Activated naive CD8-positive, alpha-beta T cell treated with anti-CD3 and anti-CD28 coated beads, Interleukin-2, amount 10 ng/mL, durations not matched to agents 7 days and 5 days (primary cell): ENCODE measurements at regions of chr15 and their contacts with region 1.

Region 1: DNA sequence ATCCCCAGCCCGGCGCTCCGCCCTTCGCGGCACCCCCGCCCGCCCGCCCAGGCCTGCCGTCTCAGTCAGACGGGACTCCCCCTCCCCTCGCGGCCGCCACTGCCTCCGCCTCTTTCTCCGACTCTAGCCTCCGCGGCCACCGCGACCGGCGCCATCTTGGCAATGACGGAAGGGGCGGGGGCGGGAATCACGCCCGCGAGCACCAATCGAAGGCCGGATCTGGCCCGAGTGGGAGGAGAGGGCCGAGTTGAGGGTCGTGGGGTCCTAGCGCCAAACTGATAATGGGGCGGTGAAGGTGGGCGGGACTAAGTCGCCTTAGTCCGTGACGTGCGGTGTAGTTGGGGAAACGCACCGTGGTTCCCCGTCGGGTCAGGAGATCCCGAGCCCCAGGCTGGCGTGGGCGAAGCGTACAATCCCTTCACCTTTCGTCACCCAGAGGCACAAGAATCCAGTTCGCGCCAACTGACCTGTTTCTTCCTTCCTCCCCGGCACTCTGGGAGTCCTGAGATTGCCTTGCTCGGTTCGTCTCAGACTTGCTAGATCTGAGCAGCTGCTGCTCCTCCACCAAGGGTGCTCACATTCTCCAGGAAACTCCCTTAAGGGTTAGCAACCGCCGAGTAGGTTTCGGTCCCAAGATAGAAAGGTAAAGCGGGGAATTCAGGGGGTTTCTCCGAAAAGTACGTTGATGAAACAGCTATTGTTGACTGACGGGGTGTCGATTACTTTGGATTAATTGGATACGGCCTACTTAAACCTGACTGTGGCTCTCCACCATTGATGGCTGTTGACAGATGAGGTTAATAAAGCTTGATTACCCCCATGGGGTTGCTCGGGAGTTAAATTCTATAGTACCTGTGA is at the start of gene DENND4A:
- DNase-seq: peak; percentile 98
- ATAC-seq: peak; percentile 85
- H3K4me3 Mint-ChIP-seq: peak within 1 kb of the TSS; percentile 90
- H3K27ac Mint-ChIP-seq: peak within 1 kb of the TSS; percentile 96
- H3K4me1 Mint-ChIP-seq: peaks cover 43% of the 10 kb centered on the region
- H3K27me3 Mint-ChIP-seq: no peaks in the 10 kb centered on the region
- total RNA-seq, gene DENND4A: 50.4 to 56.7 TPM

Region 2: DNA sequence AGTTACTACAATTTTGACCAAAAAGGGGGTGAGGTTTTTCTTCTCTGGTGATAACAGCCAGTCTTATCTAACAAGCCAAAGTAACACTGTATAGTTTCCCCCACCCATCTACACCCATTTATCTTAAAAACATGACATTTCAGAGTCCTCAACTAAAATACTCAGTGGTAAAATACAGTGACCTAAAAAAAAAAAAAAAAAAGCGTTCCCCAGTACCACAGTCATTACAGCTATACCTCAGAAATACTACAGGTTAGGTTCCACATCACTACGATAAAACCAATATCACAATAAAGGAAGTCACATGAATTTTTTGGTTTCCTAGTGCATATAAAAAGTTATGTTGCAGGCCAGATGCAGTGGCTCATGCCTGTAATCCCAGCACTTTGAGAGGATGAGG is 14.1 kb before region 1 on chr15:
- POLR2A ChIA-PET with region 1: interaction called, 26 read pairs
- DNase-seq: no peak
- ATAC-seq: peak; percentile 70
- H3K4me3 Mint-ChIP-seq: peak overlapping the region; percentile 50
- H3K27ac Mint-ChIP-seq: peak overlapping the region; percentile 77
- H3K4me1 Mint-ChIP-seq: peaks cover 22% of the 10 kb centered on the region
- H3K27me3 Mint-ChIP-seq: no peaks in the 10 kb centered on the region

Region 3: GRCh38 chr15:65818927-65819562 is 26.7 kb after region 1 on chr15:
- POLR2A ChIA-PET with region 1: interaction called, 84 read pairs
- DNase-seq: no peak
- ATAC-seq: peak; percentile 85
- H3K4me3 Mint-ChIP-seq: peak overlapping the region; percentile 66
- H3K27ac Mint-ChIP-seq: peak overlapping the region; percentile 85
- H3K4me1 Mint-ChIP-seq: peaks cover 43% of the 10 kb centered on the region
- H3K27me3 Mint-ChIP-seq: no peaks in the 10 kb centered on the region

Region 4: GRCh38 chr15:65832549-65833364 is 40.4 kb after region 1 on chr15:
- POLR2A ChIA-PET with region 1: interaction called, 51 read pairs
- DNase-seq: peak; percentile 68
- ATAC-seq: peak; percentile 66
- H3K4me3 Mint-ChIP-seq: peak overlapping the region; percentile 84
- H3K27ac Mint-ChIP-seq: peak overlapping the region; percentile 94
- H3K4me1 Mint-ChIP-seq: peaks cover 46% of the 10 kb centered on the region
- H3K27me3 Mint-ChIP-seq: no peaks in the 10 kb centered on the region

Region 5: GRCh38 chr15:66027268-66027805 is 235.0 kb after region 1 on chr15:
- POLR2A ChIA-PET with region 1: no interaction called
- DNase-seq: no peak
- ATAC-seq: no peak
- H3K4me3 Mint-ChIP-seq: no peak overlapping the region
- H3K27ac Mint-ChIP-seq: no peak overlapping the region
- H3K4me1 Mint-ChIP-seq: peaks cover 8% of the 10 kb centered on the region
- H3K27me3 Mint-ChIP-seq: peaks cover 12% of the 10 kb centered on the region